ENCODE measurements at regions of chr5 and their contacts with region 1.

Region 1: GRCh38 chr5:157858527-157859226 is at the start of gene CLINT1:
- DNase-seq: peak; percentile 92
- H3K4me3 Mint-ChIP-seq: peak within 1 kb of the TSS; percentile 91
- H3K27ac Mint-ChIP-seq: peak within 1 kb of the TSS; percentile 96
- H3K4me1 Mint-ChIP-seq: peaks cover 73% of the 10 kb centered on the region
- H3K27me3 Mint-ChIP-seq: no peaks in the 10 kb centered on the region
- total RNA-seq, gene CLINT1: 48.7 to 49.4 TPM

Region 2: GRCh38 chr5:157540707-157541446 is 317.8 kb before region 1 on chr5:
- CTCF ChIA-PET with region 1: no interaction called
- POLR2A ChIA-PET with region 1: interaction called, 3 read pairs
- intact Hi-C with region 1: loop called (anchors 10 kb)
- DNase-seq: peak; percentile 74
- H3K4me3 Mint-ChIP-seq: peak overlapping the region; percentile 65
- H3K27ac Mint-ChIP-seq: peak overlapping the region; percentile 98
- H3K4me1 Mint-ChIP-seq: peaks cover 87% of the 10 kb centered on the region
- H3K27me3 Mint-ChIP-seq: no peaks in the 10 kb centered on the region

Region 3: DNA sequence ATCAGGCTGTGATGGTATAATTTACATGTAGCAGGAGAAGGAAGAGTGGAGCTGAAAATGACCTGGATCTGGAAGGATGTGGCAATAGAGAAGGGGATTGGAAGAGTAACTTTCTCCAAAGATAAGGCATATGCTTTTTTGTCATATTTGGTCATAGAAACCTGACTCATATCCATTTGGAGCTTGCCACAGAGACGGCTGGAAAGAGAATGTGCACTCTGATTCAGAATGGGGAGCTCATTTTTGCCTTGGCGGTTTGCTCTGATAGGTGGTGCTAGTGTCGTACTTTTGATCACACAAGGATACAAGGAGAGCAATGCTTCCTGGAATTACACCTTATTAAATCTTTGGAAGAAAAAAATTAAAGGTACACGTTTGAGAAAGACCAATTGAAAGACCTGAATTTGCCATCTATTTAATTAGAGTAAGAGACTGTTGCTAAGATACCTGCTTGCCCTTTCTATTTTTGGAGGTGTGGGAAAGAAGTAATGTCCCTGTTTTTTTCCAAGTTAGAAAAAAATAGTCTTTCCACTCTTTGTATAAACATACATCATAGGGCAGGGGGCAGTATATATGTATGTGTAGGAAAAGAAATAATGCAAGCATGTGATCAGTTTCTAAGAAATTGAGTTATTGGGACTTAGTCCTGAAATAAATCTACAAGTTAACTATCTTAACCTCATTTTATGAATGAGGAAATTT is 109.8 kb before region 1 on chr5:
- CTCF ChIA-PET with region 1: no interaction called
- POLR2A ChIA-PET with region 1: interaction called, 5 read pairs
- intact Hi-C with region 1: loop called (anchors 2 kb)
- DNase-seq: peak; percentile 44
- H3K4me3 Mint-ChIP-seq: no peak overlapping the region
- H3K27ac Mint-ChIP-seq: peak overlapping the region; percentile 1
- H3K4me1 Mint-ChIP-seq: peaks cover 55% of the 10 kb centered on the region
- H3K27me3 Mint-ChIP-seq: no peaks in the 10 kb centered on the region

Region 4: DNA sequence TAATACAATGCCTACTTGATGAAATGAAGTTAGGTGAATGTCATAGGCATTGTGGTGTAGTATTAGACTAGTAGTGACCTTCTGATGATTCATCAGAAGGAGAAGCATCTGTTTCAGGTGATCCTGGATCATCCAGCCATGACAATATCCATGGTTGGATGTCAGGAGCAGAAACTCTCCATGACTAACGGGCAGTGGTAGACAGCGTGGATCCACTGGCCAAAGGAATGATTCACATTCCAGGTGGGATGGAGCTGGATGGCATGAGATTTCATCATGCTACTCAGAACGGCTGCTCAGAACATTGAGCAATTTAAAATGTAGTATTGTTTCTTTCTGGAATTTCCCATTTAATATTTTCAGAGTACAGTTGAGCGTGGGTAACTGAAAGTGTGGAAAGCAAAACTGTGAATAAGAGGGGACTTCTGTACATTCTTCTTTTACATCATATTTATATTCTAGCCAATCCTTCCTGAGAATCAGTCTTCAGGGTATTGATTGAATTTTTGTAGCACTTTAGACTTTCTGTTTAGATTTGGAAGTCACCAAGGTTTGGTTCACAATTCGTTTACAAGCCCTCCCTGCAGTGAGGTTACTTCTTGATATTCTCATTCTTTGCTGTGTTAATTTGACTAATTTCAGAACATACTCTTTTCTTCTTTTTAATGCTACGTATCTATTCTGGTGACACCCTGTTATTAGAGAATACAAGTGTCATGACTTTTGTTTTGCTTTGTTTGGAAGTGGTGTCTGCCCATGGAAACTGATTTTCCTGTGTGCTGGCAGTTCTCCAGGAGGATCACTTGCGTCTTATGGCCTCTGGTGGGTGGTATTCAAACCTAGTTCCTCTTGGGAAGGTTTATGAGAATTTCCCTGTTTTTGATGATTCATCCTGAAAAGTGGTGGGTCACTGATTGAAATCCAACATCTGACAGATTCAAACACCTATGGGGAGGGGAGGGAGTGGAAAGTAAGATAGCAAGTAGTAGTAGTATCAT is 12.5 kb after region 1 on chr5:
- CTCF ChIA-PET with region 1: interaction called, 4 read pairs
- POLR2A ChIA-PET with region 1: interaction called, 5 read pairs
- intact Hi-C with region 1: loop called (anchors 1 kb)
- DNase-seq: peak; percentile 20
- H3K4me3 Mint-ChIP-seq: no peak overlapping the region
- H3K27ac Mint-ChIP-seq: peak overlapping the region; percentile 31
- H3K4me1 Mint-ChIP-seq: peaks cover 17% of the 10 kb centered on the region
- H3K27me3 Mint-ChIP-seq: peaks cover 2% of the 10 kb centered on the region

Region 5: DNA sequence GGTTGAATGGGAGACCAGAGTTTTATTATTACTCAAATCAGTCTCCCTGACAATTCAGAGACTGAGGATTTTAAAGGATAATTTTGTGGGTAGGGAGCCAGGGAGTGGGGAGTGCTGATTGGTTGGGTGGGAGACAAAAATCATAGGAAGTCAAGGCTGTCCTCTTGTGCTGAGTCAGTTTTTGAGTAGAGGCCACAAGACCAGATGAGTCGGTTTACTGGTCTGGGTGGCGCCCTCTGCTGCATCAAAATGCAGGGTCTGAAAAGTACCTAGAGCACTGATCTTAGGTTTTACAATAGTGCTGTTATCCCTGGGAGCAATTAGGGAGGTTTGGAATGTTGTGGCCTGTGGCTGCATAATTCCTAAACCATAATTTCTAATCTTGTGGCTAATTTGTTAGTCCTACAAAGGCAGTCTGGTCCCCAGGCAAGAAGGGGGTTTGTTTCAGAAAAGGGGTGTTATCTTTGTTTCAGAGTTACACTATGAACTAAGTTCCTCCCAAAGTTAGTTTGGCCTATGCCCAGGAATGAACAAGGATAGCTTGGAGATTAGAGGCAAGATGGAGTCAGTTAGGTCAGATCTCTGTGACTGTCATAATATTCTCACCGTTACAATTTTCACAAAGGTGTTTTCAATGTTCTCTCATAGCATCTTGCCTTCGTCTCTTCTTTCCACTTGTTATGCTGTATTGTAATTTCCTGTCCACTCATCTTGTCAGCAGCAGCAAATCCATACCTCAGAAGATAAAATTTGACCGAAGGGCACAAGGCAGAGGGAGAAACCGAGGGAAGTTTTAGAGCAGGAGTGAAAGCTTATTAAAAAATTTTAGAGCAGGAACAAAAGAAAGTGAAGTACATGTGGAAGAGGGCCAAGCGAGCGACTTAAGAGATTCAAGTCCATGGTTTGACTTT is 59.5 kb after region 1 on chr5:
- CTCF ChIA-PET with region 1: interaction called, 6 read pairs
- POLR2A ChIA-PET with region 1: no interaction called
- intact Hi-C with region 1: loop called (anchors 1 kb)
- DNase-seq: peak; percentile 83
- H3K4me3 Mint-ChIP-seq: no peak overlapping the region
- H3K27ac Mint-ChIP-seq: no peak overlapping the region
- H3K4me1 Mint-ChIP-seq: peaks cover 22% of the 10 kb centered on the region
- H3K27me3 Mint-ChIP-seq: no peaks in the 10 kb centered on the region

Region 6: DNA sequence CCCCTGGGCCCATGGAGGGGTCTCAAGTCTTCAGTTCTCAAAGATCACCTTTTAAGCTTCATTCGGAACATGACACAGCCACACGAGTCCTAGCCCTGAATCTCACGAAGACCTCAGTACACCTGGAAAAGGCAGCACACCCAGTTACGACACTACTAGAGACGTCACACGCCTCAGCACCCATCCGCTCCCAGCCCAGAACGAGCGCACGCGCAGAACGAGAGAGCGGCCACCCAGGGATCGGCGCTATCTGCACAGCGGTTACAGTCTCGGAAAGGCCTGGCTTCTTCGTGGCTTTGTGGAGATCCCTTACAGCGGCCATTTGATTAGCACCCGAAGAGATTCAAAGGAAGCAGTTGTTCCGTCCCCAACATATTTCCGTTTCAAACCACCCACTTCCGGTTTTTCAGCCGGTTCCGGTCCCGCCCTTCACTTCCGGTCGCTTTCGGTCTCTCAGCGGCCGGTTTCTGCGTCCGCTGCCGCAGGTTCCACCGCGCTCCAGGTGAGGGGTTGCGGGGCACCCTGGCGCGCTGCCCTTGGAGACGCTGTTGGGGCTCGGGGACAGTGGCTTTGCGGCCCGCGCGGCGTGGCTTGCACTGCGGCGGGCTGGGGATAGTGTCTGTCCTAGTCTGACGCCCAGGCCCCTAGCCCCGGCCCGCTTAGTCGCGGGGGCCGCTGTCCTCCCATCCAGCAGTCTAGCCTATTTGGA is 1404.3 kb after region 1 on chr5 and contains the start of gene UBLCP1:
- CTCF ChIA-PET with region 1: no interaction called
- POLR2A ChIA-PET with region 1: interaction called, 10 read pairs
- intact Hi-C with region 1: no loop called
- DNase-seq: peak; percentile 88
- H3K4me3 Mint-ChIP-seq: peak within 1 kb of the TSS; percentile 97
- H3K27ac Mint-ChIP-seq: peak within 1 kb of the TSS; percentile 94
- H3K4me1 Mint-ChIP-seq: peaks cover 35% of the 10 kb centered on the region
- H3K27me3 Mint-ChIP-seq: no peaks in the 10 kb centered on the region
- total RNA-seq, gene UBLCP1: 32.9 to 34.4 TPM